GM12878 (cell line): ENCODE measurements at regions of chr6 and their contacts with region 1.

Region 1: GRCh38 chr6:106223300-106223930 is 102.1 kb downstream of the ATG5 start:
- DNase-seq: peak; percentile 52
- ATAC-seq: peak; percentile 91
- H3K4me3 ChIP-seq: no peak overlapping the region
- H3K27ac ChIP-seq: no peak overlapping the region
- H3K4me1 ChIP-seq: peaks cover 14% of the 10 kb centered on the region
- H3K27me3 ChIP-seq: no peaks in the 10 kb centered on the region
- CTCF ChIP-seq: peak; percentile 50 to 79 (median 53); a peak in 4 of 6 replicates
- EP300 ChIP-seq: no peak
- POLR2A ChIP-seq: no peak
- RAD21 ChIP-seq: peak; percentile 97

Region 2: GRCh38 chr6:105452924-105453756 is 770.3 kb before region 1 on chr6:
- CTCF ChIA-PET with region 1: interaction called, 28 read pairs
- POLR2A ChIA-PET with region 1: no interaction called
- RAD21 ChIA-PET with region 1: interaction called, 24 read pairs
- SMC1A ChIA-PET with region 1: interaction called, 38 read pairs
- in situ Hi-C with region 1: no loop called
- intact Hi-C with region 1: no loop called
- DNase-seq: peak; percentile 54
- ATAC-seq: peak; percentile 89
- H3K4me3 ChIP-seq: no peak overlapping the region
- H3K27ac ChIP-seq: peak overlapping the region; percentile 35
- H3K4me1 ChIP-seq: peaks cover 15% of the 10 kb centered on the region
- H3K27me3 ChIP-seq: no peaks in the 10 kb centered on the region
- CTCF ChIP-seq: no peak
- EP300 ChIP-seq: peak; percentile 49 to 63; a peak in 3 of 4 replicates
- POLR2A ChIP-seq: no peak
- RAD21 ChIP-seq: no peak

Region 3: GRCh38 chr6:105992315-105992961 is 231.0 kb before region 1 on chr6:
- CTCF ChIA-PET with region 1: interaction called, 16 read pairs
- POLR2A ChIA-PET with region 1: no interaction called
- RAD21 ChIA-PET with region 1: interaction called, 6 read pairs
- SMC1A ChIA-PET with region 1: interaction called, 6 read pairs
- in situ Hi-C with region 1: no loop called
- intact Hi-C with region 1: loop called (anchors 10 kb)
- DNase-seq: peak; percentile 45
- ATAC-seq: peak; percentile 98
- H3K4me3 ChIP-seq: peak overlapping the region; percentile 79
- H3K27ac ChIP-seq: no peak overlapping the region
- H3K4me1 ChIP-seq: peaks cover 5% of the 10 kb centered on the region; the same call in 1 of the 2 replicates
- H3K27me3 ChIP-seq: peaks cover 12 to 22% of the 10 kb centered on the region in 2 experiments
- CTCF ChIP-seq: no peak
- EP300 ChIP-seq: no peak
- POLR2A ChIP-seq: no peak; the same call in 1 of the 2 replicates
- RAD21 ChIP-seq: no peak

Region 4: DNA sequence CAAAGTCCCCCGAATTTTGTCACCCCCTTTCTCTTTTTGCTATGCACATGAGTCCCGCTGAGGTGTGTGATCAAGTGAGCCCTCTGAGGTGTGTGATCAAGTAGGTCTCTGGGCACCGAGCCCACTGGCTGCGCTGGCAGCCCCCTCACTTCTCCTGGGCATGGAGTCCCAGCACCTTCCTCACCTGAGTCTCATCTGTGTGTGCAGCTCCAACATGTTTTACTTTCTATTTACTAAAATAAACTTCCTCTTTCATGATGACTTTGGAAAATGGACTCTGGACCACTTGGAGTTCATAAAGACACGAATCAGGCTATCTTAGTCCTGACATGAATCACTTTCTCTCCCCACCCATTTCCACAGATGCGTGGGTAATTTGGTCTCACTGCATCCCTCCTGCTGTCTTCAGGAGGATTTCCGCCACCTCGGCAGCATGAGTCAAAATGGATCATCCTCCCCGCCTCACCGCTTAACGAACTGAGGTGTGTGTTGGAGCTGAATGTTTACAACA is 97.4 kb before region 1 on chr6:
- CTCF ChIA-PET with region 1: interaction called, 14 read pairs
- POLR2A ChIA-PET with region 1: no interaction called
- RAD21 ChIA-PET with region 1: interaction called, 3 read pairs
- SMC1A ChIA-PET with region 1: interaction called, 10 read pairs
- in situ Hi-C with region 1: no loop called
- intact Hi-C with region 1: no loop called
- DNase-seq: peak; percentile 62
- ATAC-seq: peak; percentile 75
- H3K4me3 ChIP-seq: peak overlapping the region; percentile 38; the same call in 1 of the 2 replicates
- H3K27ac ChIP-seq: peak overlapping the region; percentile 55
- H3K4me1 ChIP-seq: peaks cover 46% of the 10 kb centered on the region
- H3K27me3 ChIP-seq: peaks cover 0 to 2% of the 10 kb centered on the region in 2 experiments; a peak in 1 of 4 replicates
- CTCF ChIP-seq: no peak
- EP300 ChIP-seq: no peak
- POLR2A ChIP-seq: no peak
- RAD21 ChIP-seq: no peak

Region 5: DNA sequence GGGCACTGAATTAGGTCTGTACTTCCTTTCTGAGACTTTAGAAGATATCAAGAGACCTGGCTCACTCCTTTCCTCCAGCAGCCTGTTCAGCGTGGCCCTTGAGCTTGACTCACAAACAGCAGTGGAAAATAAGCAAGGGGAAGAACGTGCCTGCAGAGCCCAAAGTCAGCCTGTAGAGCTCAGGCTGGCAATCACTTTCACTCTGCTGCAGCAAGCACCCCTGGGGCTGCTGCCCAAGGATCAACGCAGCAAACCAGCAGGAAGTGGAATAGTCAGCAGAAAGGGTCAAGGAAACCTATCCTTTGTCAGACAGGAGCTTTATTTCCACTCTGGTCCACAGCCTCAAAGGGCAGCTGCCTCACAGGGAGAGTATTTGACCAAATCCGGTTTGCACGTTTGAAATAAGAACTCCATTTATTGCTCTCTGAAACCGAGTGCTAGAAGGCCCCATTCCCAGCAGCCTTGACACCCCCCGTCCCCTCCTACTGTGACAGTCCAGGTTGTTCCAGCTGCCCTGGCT is 59.9 kb before region 1 on chr6:
- CTCF ChIA-PET with region 1: interaction called, 28 read pairs
- POLR2A ChIA-PET with region 1: interaction called, 7 read pairs
- RAD21 ChIA-PET with region 1: interaction called, 14 read pairs
- SMC1A ChIA-PET with region 1: interaction called, 22 read pairs
- in situ Hi-C with region 1: no loop called
- intact Hi-C with region 1: loop called (anchors 5 kb)
- DNase-seq: peak; percentile 69
- ATAC-seq: peak; percentile 52
- H3K4me3 ChIP-seq: peak overlapping the region; percentile 13; the same call in 1 of the 2 replicates
- H3K27ac ChIP-seq: peak overlapping the region; percentile 97
- H3K4me1 ChIP-seq: peaks cover 64% of the 10 kb centered on the region
- H3K27me3 ChIP-seq: no peaks in the 10 kb centered on the region
- CTCF ChIP-seq: peak in 2 of 3 experiments; percentile 22 to 23; a peak in 2 of 6 replicates
- EP300 ChIP-seq: no peak
- POLR2A ChIP-seq: no peak
- RAD21 ChIP-seq: no peak

Region 6: GRCh38 chr6:106206905-106207304 is 16.5 kb before region 1 on chr6:
- CTCF ChIA-PET with region 1: interaction called, 62 read pairs
- POLR2A ChIA-PET with region 1: no interaction called
- RAD21 ChIA-PET with region 1: interaction called, 4 read pairs
- SMC1A ChIA-PET with region 1: interaction called, 60 read pairs
- in situ Hi-C with region 1: no loop called
- intact Hi-C with region 1: no loop called
- DNase-seq: no peak
- ATAC-seq: peak; percentile 80
- H3K4me3 ChIP-seq: no peak overlapping the region
- H3K27ac ChIP-seq: peak overlapping the region; percentile 41; the same call in 1 of the 2 replicates
- H3K4me1 ChIP-seq: peaks cover 4% of the 10 kb centered on the region; the same call in 1 of the 2 replicates
- H3K27me3 ChIP-seq: no peaks in the 10 kb centered on the region
- CTCF ChIP-seq: no peak
- EP300 ChIP-seq: no peak
- POLR2A ChIP-seq: no peak
- RAD21 ChIP-seq: no peak

Region 7: GRCh38 chr6:106279179-106279578 is 55.8 kb after region 1 on chr6:
- CTCF ChIA-PET with region 1: interaction called, 15 read pairs
- POLR2A ChIA-PET with region 1: no interaction called
- RAD21 ChIA-PET with region 1: interaction called, 9 read pairs
- SMC1A ChIA-PET with region 1: interaction called, 7 read pairs
- in situ Hi-C with region 1: no loop called
- intact Hi-C with region 1: no loop called
- DNase-seq: no peak
- ATAC-seq: no peak
- H3K4me3 ChIP-seq: no peak overlapping the region
- H3K27ac ChIP-seq: no peak overlapping the region
- H3K4me1 ChIP-seq: peaks cover 4% of the 10 kb centered on the region; the same call in 1 of the 2 replicates
- H3K27me3 ChIP-seq: no peaks in the 10 kb centered on the region
- CTCF ChIP-seq: no peak
- EP300 ChIP-seq: no peak
- POLR2A ChIP-seq: no peak
- RAD21 ChIP-seq: no peak